Vagina (tissue), 2 donors: ENCODE measurements at regions of chr17 and their contacts with region 1.

Region 1: DNA sequence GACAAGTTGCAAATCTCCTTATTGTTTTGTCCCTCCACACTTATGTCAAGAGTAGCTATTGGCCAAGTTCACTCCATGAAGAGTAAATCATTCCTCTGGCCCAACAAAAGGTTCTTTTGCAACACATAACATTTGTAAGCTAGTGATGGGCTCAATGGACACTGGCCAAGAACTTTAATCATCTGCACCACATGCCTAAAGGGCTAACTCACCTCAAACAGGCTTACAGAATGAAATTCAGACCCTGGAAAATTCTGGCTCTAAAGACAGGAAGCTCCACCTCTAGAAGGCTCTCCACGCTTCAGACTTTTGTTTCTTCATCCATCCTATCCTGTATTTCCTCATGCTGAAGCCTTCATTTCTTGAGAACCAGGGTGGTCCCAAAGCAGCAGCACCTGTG is 10.9 kb upstream of the ANKFN1 start:
- DNase-seq: peak in 1 of 2 donors; percentile 92
- H3K4me3 ChIP-seq: no peak overlapping the region
- H3K27ac ChIP-seq: no peak overlapping the region
- H3K4me1 ChIP-seq: peaks cover 8% of the 10 kb centered on the region
- H3K27me3 ChIP-seq: no peaks in the 10 kb centered on the region
- CTCF ChIP-seq: no peak
- POLR2A ChIP-seq: no peak

Region 2: DNA sequence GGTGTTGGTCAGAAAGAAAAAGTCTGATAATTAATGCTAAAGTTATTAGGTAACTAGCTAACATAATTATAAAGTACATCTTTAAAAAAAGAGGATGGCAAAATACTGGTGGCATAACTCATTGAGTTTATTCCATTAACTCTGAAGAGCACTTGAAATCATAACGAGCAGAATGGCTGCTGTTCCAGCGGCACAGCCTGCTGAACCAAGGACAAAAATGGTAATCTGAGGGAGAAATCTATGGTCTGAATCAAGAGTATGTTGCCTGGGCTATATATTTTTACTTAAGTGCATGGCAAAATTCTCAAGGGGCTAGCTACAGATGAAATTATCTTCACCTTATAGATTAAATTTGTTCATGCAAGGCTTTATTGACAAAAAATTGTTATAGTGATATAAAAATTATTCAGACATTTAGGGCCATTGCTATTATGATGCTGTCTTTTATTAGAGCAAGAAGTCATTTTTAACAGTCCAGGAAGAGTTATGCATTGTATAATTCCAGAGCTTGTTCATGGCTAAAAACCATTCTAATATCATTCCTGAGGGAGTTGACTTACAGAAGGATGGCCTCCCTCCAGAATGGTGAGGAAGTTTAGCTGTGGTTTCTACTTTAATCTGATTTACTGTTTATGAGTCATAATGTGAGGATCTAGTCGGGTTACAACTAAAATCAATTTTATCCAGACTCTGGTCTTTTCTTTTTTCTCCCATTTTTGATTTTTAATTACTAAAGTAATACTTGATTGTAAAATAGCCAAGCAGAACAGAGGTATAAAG is 30.4 kb before region 1 on chr17:
- intact Hi-C with region 1: loop called (anchors 1 kb)
- DNase-seq: no peak
- H3K4me3 ChIP-seq: no peak overlapping the region
- H3K27ac ChIP-seq: no peak overlapping the region
- H3K4me1 ChIP-seq: no peaks in the 10 kb centered on the region
- H3K27me3 ChIP-seq: no peaks in the 10 kb centered on the region
- CTCF ChIP-seq: no peak
- POLR2A ChIP-seq: no peak